ENCODE measurements at regions of chr12 and their contacts with region 1.

Region 1: DNA sequence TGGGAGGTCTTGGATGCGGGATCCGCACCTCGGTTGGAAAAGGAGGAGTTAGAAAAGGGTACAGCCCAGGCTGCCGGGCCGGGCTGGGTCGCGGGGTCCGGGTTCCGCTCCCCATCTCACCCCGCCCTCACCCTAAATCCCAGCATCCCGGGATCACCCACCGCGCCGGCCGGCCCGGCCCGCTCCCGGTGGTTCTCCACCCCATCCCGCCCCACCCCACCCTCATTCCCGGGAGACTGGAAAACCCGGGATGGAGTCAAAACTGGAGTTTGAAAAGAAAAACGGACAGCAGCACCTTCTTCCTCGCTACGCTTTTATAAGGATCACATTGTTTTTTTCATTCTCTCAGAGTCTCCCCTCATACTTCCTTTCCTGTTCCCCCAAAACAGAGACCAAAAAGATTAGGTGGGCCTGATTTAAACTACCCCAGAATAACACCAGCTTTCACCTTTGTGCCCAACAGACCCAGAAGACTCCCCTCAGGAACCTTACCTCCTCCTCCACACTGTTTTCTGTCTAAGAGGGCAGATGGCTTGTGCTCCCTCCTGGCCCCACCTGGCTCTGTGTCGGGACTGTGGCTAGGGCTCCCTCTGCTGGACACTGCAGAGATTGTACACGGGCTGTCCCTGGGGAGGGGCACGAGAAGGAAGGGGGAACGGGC is 2.8 kb downstream of the GLI1 start:
- DNase-seq: no peak
- H3K4me3 ChIP-seq: peak overlapping the region; percentile 88
- H3K27ac ChIP-seq: peak overlapping the region; percentile 85
- H3K27me3 ChIP-seq: no peaks in the 10 kb centered on the region
- CTCF ChIP-seq: peak; percentile 98

Region 2: GRCh38 chr12:57238854-57239554 is 223.4 kb before region 1 on chr12:
- CTCF ChIA-PET with region 1: interaction called, 10 read pairs
- POLR2A ChIA-PET with region 1: interaction called, 3 read pairs
- DNase-seq: peak; percentile 72
- H3K4me3 ChIP-seq: peak overlapping the region; percentile 68
- H3K27ac ChIP-seq: peak overlapping the region; percentile 89
- H3K27me3 ChIP-seq: peaks cover 20% of the 10 kb centered on the region
- CTCF ChIP-seq: peak; percentile 100

Region 3: GRCh38 chr12:57266681-57267080 is 195.7 kb before region 1 on chr12:
- CTCF ChIA-PET with region 1: interaction called, 17 read pairs
- POLR2A ChIA-PET with region 1: no interaction called
- DNase-seq: no peak
- H3K4me3 ChIP-seq: no peak overlapping the region
- H3K27ac ChIP-seq: no peak overlapping the region
- H3K27me3 ChIP-seq: no peaks in the 10 kb centered on the region
- CTCF ChIP-seq: no peak

Region 4: DNA sequence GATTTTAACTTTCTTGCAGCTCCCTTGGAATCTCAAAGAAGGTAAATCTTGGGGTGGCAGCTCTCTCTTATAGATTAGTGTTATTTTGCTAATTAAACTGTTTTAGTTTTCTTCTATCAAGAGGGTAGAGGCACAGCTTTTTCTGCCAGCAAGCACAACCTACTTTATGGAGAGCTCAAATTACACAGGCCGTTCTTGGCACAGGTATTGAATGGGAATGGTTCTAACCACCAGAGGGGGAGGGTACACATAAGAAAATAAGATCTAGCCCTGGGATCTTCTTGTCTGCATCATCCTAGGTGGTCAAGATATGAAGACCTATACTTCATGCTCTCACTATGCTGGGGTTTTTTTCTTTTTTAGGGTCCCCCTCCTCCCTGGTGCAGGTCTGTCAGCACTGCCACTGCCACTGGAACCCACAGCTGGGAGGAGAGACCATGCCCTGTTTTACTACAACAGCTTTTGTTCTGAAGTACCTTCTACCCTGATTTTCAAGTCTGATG is 162.8 kb before region 1 on chr12:
- CTCF ChIA-PET with region 1: interaction called, 10 read pairs
- POLR2A ChIA-PET with region 1: no interaction called
- DNase-seq: no peak
- H3K4me3 ChIP-seq: no peak overlapping the region
- H3K27ac ChIP-seq: no peak overlapping the region
- H3K27me3 ChIP-seq: no peaks in the 10 kb centered on the region
- CTCF ChIP-seq: no peak

Region 5: GRCh38 chr12:57332646-57333312 is 129.6 kb before region 1 on chr12:
- CTCF ChIA-PET with region 1: interaction called, 10 read pairs
- POLR2A ChIA-PET with region 1: no interaction called
- DNase-seq: no peak
- H3K4me3 ChIP-seq: no peak overlapping the region
- H3K27ac ChIP-seq: no peak overlapping the region
- H3K27me3 ChIP-seq: no peaks in the 10 kb centered on the region
- CTCF ChIP-seq: no peak

Region 6: GRCh38 chr12:57416039-57416996 is 46.1 kb before region 1 on chr12:
- CTCF ChIA-PET with region 1: interaction called, 14 read pairs
- POLR2A ChIA-PET with region 1: interaction called, 10 read pairs
- DNase-seq: no peak
- H3K4me3 ChIP-seq: no peak overlapping the region
- H3K27ac ChIP-seq: no peak overlapping the region
- H3K27me3 ChIP-seq: no peaks in the 10 kb centered on the region
- CTCF ChIP-seq: no peak

Region 7: DNA sequence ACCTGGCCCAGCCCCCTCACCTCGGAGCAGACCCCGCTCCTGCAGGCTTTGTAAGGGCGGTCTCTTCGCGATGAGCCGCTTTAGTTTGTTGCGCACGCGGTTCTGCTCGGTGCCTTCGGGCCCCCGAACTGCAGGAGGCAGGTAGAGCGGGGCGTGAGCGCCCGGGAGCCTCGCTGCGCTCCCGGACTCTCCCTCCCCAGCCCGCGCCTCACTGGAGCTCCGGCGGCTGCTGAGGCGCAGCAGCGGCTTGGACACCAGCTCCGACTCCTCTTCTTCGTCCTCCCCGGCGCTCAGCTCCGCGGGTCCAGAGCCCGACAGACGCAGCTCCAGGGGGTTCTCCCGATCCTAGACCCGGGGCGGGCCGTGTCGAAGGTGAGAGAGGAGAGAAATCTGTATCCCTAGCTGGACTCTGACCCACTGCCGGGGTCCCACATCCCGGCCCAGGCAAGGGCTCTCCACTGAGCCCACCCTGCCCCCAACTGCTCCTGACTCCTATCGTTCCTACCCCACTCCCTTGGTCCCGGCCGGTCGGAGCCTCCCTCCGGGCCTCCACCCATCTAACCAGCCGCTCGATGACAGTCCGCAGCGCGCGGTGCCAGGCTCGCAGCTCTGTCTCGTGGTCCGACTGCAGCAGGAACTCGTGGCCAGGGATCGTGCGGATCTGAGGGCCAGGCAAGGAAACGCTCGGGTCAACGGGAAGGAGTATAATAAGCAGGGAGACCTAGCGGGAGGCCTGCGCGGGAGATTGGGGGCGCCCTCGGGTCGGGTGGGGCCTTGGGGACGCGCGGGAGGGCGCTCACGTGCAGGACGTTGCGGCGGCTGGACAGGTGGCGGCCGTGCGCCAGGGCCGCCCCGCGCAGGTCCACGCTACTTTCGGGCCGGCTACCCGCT is 13.1 kb after region 1 on chr12:
- CTCF ChIA-PET with region 1: interaction called, 14 read pairs
- POLR2A ChIA-PET with region 1: no interaction called
- DNase-seq: no peak
- H3K4me3 ChIP-seq: peak overlapping the region; percentile 36
- H3K27ac ChIP-seq: no peak overlapping the region
- H3K27me3 ChIP-seq: peaks cover 42% of the 10 kb centered on the region
- CTCF ChIP-seq: no peak